ENCODE measurements at regions of chr4 and their contacts with region 1.

Region 1: GRCh38 chr4:145618932-145619638 is at the start of gene MMAA:
- DNase-seq: peak; percentile 95 to 97
- ATAC-seq: peak; percentile 98
- total RNA-seq, gene MMAA: 15.0 to 18.3 TPM

Region 2: DNA sequence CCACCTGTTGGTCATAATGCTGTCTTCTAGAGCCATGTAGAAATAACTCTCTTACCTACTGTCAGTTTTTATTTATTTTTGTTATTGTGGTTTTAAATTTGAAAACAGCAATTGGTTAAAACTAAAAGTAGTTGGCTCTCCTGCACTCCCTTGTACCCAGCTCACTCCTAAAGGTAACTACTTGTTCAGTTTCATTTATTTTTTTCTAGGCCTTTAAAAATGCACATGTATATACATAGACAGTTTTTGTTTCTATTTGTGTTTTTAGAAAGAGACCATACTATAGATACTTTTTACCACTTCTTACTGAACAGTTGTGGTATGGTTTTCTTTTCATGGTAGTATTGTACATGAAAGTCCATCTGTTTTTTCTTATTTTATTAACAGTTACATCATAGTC is 120.7 kb before region 1 on chr4:
- intact Hi-C with region 1: loop called in 1 of 2 experiments (anchors 10 kb)
- DNase-seq: no peak
- ATAC-seq: no peak

Region 3: GRCh38 chr4:145665773-145666172 is 46.7 kb after region 1 on chr4:
- intact Hi-C with region 1: no loop called
- DNase-seq: no peak
- ATAC-seq: no peak

Measured in left colon (tissue), 2 donors.